T-cell (primary cell): ENCODE measurements at regions of chr3 and their contacts with region 1.

Region 1: DNA sequence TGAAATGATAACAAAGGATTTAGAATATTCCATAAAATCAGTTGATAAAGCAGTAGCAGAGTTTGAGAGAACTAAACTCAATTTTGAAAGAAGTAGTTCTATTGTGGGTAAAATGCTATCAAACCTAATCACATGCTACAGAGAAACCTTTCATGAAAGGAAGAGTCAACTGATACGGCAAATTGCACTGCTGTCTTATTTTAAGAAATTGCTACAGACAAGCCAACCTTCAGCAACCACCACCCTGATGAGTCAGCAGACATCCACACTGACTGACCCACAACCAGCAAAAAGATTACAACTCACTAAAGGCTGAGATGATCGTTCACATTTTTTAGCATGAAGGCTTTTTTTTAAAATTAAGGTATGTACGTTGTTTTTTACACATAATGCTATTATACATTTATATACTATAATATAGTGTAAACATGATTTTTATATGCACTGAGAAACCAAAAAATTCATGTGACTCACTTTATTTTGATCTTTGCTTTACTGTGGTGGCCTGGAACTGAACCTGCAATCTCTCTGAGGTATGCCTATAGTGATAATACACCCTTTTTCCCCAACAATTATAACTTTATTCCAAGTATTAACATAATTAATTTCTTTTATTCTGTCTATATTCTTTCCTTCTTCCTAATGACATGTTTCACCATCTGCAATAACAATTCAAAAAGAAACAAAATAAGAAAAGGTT is 109.9 kb downstream of the TBC1D5 start:
- DNase-seq: no peak
- ATAC-seq: no peak
- H3K4me3 ChIP-seq: no peak overlapping the region
- H3K4me3 Mint-ChIP-seq: no peak overlapping the region
- H3K27ac ChIP-seq: no peak overlapping the region
- H3K27ac Mint-ChIP-seq: no peak overlapping the region
- H3K4me1 ChIP-seq: no peaks in the 10 kb centered on the region
- H3K4me1 Mint-ChIP-seq: peaks cover 20 to 32% (median 27%) of the 10 kb centered on the region in 3 donors
- H3K27me3 ChIP-seq: no peaks in the 10 kb centered on the region
- H3K27me3 Mint-ChIP-seq: no peaks in the 10 kb centered on the region

Region 2: DNA sequence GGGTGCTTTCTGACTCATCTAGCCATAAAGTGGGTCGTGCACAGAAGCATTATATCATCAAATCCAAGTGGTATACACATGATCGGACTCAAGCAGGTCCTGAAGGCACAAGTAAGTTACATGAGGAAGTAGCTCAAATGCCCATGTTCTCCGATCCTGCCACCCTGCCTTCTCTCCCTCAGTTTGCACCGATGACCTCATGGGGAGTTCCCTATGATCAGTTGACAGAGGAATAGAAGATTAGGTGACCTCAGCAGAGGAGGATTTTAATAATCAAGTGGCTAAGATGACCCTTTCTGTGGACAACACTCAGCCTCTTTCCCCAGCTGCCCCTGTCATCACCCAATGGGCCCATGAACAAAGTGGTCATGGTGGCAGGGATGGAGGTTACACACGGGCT is 39.6 kb before region 1 on chr3:
- CTCF ChIA-PET with region 1: no interaction called
- POLR2A ChIA-PET with region 1: no interaction called
- DNase-seq: no peak
- ATAC-seq: no peak
- H3K4me3 ChIP-seq: no peak overlapping the region
- H3K4me3 Mint-ChIP-seq: no peak overlapping the region
- H3K27ac ChIP-seq: no peak overlapping the region
- H3K27ac Mint-ChIP-seq: no peak overlapping the region
- H3K4me1 ChIP-seq: no peaks in the 10 kb centered on the region
- H3K4me1 Mint-ChIP-seq: peaks cover 0 to 2% (median 1%) of the 10 kb centered on the region in 3 donors
- H3K27me3 ChIP-seq: no peaks in the 10 kb centered on the region
- H3K27me3 Mint-ChIP-seq: no peaks in the 10 kb centered on the region

Region 3: DNA sequence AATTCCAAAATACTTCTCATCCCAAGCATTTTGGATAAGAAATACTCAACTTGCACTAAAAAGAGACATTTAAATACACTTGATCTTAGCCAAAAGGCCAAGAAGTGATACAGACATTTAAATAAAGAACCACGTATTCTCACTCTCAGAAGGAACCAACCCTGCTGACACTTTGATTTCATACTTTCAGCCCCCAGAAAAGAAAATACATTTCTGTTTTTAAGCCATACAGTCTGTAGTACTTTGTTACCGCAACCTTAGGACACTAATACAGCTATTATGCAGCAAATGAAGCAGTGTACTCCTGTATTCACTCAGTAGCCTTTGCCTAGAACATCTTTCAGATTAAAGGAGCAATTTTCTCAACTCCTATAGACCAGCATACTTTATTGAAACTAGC is 23.2 kb after region 1 on chr3:
- CTCF ChIA-PET with region 1: no interaction called
- POLR2A ChIA-PET with region 1: interaction called in 1 of 2 experiments, 23 read pairs
- DNase-seq: no peak
- ATAC-seq: no peak
- H3K4me3 ChIP-seq: no peak overlapping the region
- H3K4me3 Mint-ChIP-seq: no peak overlapping the region
- H3K27ac ChIP-seq: no peak overlapping the region
- H3K27ac Mint-ChIP-seq: no peak overlapping the region
- H3K4me1 ChIP-seq: no peaks in the 10 kb centered on the region
- H3K4me1 Mint-ChIP-seq: peaks cover 8 to 18% (median 11%) of the 10 kb centered on the region in 3 donors
- H3K27me3 ChIP-seq: no peaks in the 10 kb centered on the region
- H3K27me3 Mint-ChIP-seq: no peaks in the 10 kb centered on the region

Region 4: GRCh38 chr3:18499301-18499700 is 866.8 kb after region 1 on chr3:
- CTCF ChIA-PET with region 1: no interaction called
- POLR2A ChIA-PET with region 1: no interaction called
- DNase-seq: peak in 31 of 35 experiments; percentile 3 to 60 (median 14)
- ATAC-seq: peak; percentile 90 to 99 (median 98)
- H3K4me3 ChIP-seq: no peak overlapping the region
- H3K4me3 Mint-ChIP-seq: peak overlapping the region; percentile 6 to 43 (median 21)
- H3K27ac ChIP-seq: peak overlapping the region; percentile 13
- H3K27ac Mint-ChIP-seq: peak overlapping the region; percentile 77 to 89
- H3K4me1 ChIP-seq: peaks cover 0 to 33% of the 10 kb centered on the region in 2 experiments
- H3K4me1 Mint-ChIP-seq: peaks cover 44 to 49% (median 46%) of the 10 kb centered on the region in 3 donors
- H3K27me3 ChIP-seq: no peaks in the 10 kb centered on the region
- H3K27me3 Mint-ChIP-seq: no peaks in the 10 kb centered on the region

Region 5: DNA sequence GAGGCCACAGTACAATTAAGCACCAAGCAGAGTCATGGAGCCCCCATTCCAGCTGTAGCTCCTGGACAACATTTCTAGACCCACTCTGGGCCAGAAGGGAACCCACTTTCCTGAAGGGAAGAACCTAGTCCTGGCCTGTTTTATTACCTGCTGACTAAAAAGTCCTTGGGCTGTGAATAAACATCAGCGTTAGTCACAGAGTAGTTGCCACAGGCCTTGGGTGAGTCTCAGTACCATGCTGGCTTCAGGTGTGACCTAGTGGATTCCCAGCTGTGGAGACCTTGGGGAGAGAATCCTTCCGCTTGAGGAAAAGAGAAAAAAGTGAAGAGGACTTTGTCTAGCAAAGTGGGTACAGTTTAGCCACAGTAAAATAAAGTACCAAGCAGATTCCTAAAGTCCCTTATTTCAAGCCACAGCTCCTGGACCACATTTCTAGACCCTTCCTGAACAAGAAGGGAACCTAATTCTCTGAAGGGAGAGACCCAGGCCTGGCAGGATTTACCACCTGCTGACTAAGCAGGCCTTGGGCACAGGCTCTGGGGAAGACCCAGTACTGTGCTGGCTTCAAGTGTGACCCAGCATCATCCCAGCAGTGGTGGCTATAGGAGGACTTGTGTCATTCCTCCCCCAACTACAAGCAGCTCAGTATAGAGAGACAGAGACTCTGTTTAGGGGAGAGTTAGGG is 1397.4 kb after region 1 on chr3:
- CTCF ChIA-PET with region 1: interaction called in 1 of 2 experiments, 12 read pairs
- POLR2A ChIA-PET with region 1: no interaction called
- DNase-seq: no peak
- ATAC-seq: peak in 2 of 4 experiments; percentile 22 to 23
- H3K4me3 ChIP-seq: no peak overlapping the region
- H3K4me3 Mint-ChIP-seq: no peak overlapping the region
- H3K27ac ChIP-seq: no peak overlapping the region
- H3K27ac Mint-ChIP-seq: no peak overlapping the region
- H3K4me1 ChIP-seq: no peaks in the 10 kb centered on the region
- H3K4me1 Mint-ChIP-seq: peaks cover 0 to 5% (median 0%) of the 10 kb centered on the region in 3 donors
- H3K27me3 ChIP-seq: no peaks in the 10 kb centered on the region
- H3K27me3 Mint-ChIP-seq: peaks cover 3 to 19% of the 10 kb centered on the region in 2 donors